ENCODE measurements at regions of chr1 and their contacts with region 1.

Region 1: DNA sequence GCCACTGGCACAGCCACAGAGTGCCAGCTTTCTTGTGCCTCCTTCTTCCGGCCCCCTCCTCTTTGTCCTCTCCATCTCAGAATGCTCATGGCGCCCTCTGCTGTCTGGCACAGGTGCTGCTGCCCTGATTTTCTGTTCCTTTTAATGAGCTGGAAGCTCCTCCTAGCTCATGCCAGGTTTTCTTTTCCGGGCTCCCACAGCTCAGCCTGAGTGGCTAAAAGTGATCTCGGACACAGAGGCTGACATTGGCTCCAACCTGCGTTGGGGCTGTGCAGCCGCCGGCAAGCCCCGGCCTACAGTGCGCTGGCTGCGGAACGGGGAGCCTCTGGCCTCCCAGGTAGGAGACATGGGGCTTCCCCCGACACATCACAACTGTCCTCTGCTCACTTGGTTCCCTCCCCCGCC is 18.7 kb downstream of the CNTN2 start:
- DNase-seq: peak; percentile 59 to 66 (median 63)
- H3K4me3 ChIP-seq: no peak overlapping the region
- H3K4me3 Mint-ChIP-seq: peak overlapping the region in 1 of 8 donors; percentile 36
- H3K27ac ChIP-seq: no peak overlapping the region
- H3K27ac Mint-ChIP-seq: no peak overlapping the region
- H3K4me1 ChIP-seq: no peaks in the 10 kb centered on the region
- H3K4me1 Mint-ChIP-seq: peaks cover 0 to 2% (median 0%) of the 10 kb centered on the region in 4 donors
- H3K27me3 ChIP-seq: no peaks in the 10 kb centered on the region
- H3K27me3 Mint-ChIP-seq: peaks cover 0 to 1% of the 10 kb centered on the region in 2 donors

Region 2: GRCh38 chr1:204726478-204726877 is 335.2 kb before region 1 on chr1:
- CTCF ChIA-PET with region 1: no interaction called
- POLR2A ChIA-PET with region 1: no interaction called
- intact Hi-C with region 1: no loop called
- DNase-seq: no peak
- H3K4me3 ChIP-seq: no peak overlapping the region
- H3K4me3 Mint-ChIP-seq: no peak overlapping the region
- H3K27ac ChIP-seq: no peak overlapping the region
- H3K27ac Mint-ChIP-seq: peak overlapping the region in 1 of 7 donors; percentile 0
- H3K4me1 ChIP-seq: no peaks in the 10 kb centered on the region
- H3K4me1 Mint-ChIP-seq: no peaks in the 10 kb centered on the region
- H3K27me3 ChIP-seq: no peaks in the 10 kb centered on the region
- H3K27me3 Mint-ChIP-seq: peaks cover 8 to 12% of the 10 kb centered on the region in 2 donors

Region 3: DNA sequence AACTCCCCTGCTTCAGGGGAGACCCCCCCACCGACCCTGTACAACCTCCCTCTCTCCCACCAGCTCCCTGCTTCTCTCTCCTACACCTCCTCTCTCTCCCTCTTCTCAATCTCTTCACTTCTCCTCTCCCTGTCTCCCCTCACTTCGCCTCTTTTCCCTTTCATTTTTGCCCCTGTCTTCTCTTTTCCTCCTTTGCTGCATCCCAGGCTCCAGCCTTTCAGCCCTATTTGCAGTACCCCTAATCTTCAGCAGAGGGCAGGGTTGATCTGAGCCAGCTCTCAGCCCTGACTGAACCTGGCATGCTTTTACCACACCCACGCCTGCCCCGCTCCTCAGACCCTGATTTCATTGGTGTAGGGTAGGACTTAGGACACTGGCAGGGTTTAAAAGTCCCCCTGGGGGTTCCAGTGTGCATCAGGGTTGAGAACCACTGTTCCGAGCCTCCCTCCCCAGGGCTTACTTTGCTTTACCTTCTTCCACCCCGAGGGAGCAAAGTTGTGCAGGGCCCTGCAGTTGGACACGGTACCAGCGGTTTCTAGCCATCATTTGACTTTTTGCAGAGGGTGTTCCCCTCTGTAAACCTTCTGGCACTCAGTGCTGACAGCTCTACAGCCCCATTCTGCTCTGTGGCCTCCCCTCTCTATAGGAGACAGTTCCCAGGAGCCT is 86.0 kb before region 1 on chr1:
- CTCF ChIA-PET with region 1: interaction called, 15 read pairs
- POLR2A ChIA-PET with region 1: no interaction called
- intact Hi-C with region 1: loop called (anchors 1 kb)
- DNase-seq: peak in 4 of 5 donors; percentile 27 to 47 (median 31)
- H3K4me3 ChIP-seq: no peak overlapping the region
- H3K4me3 Mint-ChIP-seq: no peak overlapping the region
- H3K27ac ChIP-seq: no peak overlapping the region
- H3K27ac Mint-ChIP-seq: no peak overlapping the region
- H3K4me1 ChIP-seq: no peaks in the 10 kb centered on the region
- H3K4me1 Mint-ChIP-seq: peaks cover 0 to 3% (median 0%) of the 10 kb centered on the region in 4 donors
- H3K27me3 ChIP-seq: no peaks in the 10 kb centered on the region
- H3K27me3 Mint-ChIP-seq: peaks cover 15 to 37% of the 10 kb centered on the region in 2 donors

Region 4: GRCh38 chr1:204989266-204990058 is 72.2 kb before region 1 on chr1:
- CTCF ChIA-PET with region 1: interaction called, 17 read pairs
- POLR2A ChIA-PET with region 1: interaction called, 4 read pairs
- intact Hi-C with region 1: loop called (anchors 1 kb)
- DNase-seq: peak in 4 of 5 donors; percentile 19 to 37 (median 24)
- H3K4me3 ChIP-seq: no peak overlapping the region
- H3K4me3 Mint-ChIP-seq: no peak overlapping the region
- H3K27ac ChIP-seq: no peak overlapping the region
- H3K27ac Mint-ChIP-seq: no peak overlapping the region
- H3K4me1 ChIP-seq: no peaks in the 10 kb centered on the region
- H3K4me1 Mint-ChIP-seq: peaks cover 2 to 8% (median 6%) of the 10 kb centered on the region in 4 donors
- H3K27me3 ChIP-seq: no peaks in the 10 kb centered on the region
- H3K27me3 Mint-ChIP-seq: peaks cover 0 to 14% of the 10 kb centered on the region in 2 donors

Region 5: DNA sequence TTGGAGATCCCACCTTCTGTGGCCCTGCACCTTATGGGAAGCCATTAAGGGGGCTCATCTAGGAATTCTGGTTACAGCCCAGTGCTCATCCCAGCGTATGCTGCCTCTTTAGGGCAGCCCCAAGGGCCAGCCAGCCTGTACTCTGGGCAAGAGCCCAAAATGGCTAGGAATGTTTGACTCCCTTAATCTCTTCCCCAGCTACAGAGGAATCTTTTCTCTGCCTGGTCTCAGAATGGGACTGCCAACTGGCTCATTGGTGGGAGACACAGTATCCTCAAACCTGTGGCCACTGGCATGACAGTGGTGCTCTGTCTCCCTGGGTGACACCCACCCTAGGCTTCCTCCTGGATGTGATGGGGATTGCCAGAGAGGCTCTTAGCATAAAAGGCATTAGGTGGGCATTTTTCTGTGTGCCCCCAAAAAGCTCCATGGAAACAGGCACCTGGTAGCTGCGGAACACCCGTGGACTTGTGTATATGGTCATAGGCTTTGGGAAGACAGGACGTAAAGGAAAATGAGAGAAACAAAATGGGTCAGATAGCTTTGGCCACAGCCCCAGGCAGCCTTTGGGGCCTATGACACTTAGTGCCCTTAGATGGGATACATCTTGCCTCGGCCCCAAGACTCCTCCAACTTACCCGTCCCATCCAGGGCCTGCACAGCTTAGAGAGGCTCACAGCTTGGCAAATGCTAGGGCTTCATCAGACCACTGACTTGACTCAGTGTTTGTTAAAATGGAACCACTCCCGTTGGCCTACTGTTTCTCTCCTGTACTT is 15.7 kb after region 1 on chr1:
- CTCF ChIA-PET with region 1: interaction called, 44 read pairs
- POLR2A ChIA-PET with region 1: no interaction called
- intact Hi-C with region 1: no loop called
- DNase-seq: no peak
- H3K4me3 ChIP-seq: no peak overlapping the region
- H3K4me3 Mint-ChIP-seq: no peak overlapping the region
- H3K27ac ChIP-seq: no peak overlapping the region
- H3K27ac Mint-ChIP-seq: no peak overlapping the region
- H3K4me1 ChIP-seq: no peaks in the 10 kb centered on the region
- H3K4me1 Mint-ChIP-seq: no peaks in the 10 kb centered on the region
- H3K27me3 ChIP-seq: no peaks in the 10 kb centered on the region
- H3K27me3 Mint-ChIP-seq: no peaks in the 10 kb centered on the region